ENCODE measurements at regions of chr3 and their contacts with region 1.

Region 1: DNA sequence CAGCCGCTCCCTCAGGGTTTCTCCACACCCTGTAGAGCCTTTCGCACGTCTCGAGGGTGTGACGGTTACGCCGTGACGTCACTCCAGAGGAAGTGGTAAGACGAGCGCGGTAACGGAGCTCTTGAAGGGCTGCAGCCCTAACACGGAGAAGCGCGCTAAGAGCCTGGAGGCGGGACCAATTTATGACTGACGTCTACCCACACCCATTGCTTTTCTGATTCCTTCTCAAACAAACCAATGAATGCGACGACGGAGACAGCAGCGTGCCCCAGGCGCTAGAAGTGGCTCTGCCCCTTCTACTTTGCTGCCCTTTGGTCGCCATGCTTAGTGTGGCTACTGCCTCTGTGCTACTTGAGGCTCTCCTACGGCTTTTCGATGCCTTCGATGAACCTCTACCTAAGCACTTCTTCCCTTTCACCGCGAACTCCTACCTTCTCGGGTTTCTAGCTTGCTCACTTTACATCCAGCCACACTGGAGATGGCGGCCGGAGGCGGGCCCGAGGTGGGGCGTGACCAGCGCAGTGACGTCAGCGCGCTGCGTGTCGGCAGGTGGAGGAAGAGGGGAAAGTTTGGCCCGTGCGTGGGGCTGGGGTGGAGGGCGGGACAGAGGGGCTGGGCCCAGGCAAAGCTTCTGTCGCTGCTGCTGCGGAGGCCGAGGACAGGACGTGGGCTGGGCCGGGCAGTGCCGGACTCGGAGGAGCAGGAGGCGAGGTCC is at the start of gene OXSR1:
- DNase-seq: peak; percentile 94 to 100 (median 97)
- ATAC-seq: peak; percentile 89 to 94 (median 91)
- H3K4me3 ChIP-seq: peak within 1 kb of the TSS; percentile 89 to 90
- H3K4me3 Mint-ChIP-seq: peak within 1 kb of the TSS; percentile 85 to 93 (median 92)
- H3K27ac ChIP-seq: peak within 1 kb of the TSS; percentile 100
- H3K27ac Mint-ChIP-seq: peak within 1 kb of the TSS; percentile 100
- H3K4me1 ChIP-seq: peaks cover 15 to 24% of the 10 kb centered on the region in 2 experiments
- H3K4me1 Mint-ChIP-seq: peaks cover 42 to 55% (median 51%) of the 10 kb centered on the region in 3 donors
- H3K27me3 ChIP-seq: no peaks in the 10 kb centered on the region
- H3K27me3 Mint-ChIP-seq: no peaks in the 10 kb centered on the region
- total RNA-seq, gene OXSR1: 30.7 to 40.4 (median 37.4) TPM

Region 2: GRCh38 chr3:38136777-38137614 is 28.1 kb before region 1 on chr3 and contains the start of gene ACAA1:
- CTCF ChIA-PET with region 1: interaction called, 3 to 24 read pairs
- POLR2A ChIA-PET with region 1: interaction called, 15 to 22 read pairs
- DNase-seq: peak; percentile 90 to 98 (median 96)
- ATAC-seq: peak; percentile 88 to 91 (median 90)
- H3K4me3 ChIP-seq: peak within 1 kb of the TSS; percentile 93 to 98
- H3K4me3 Mint-ChIP-seq: peak within 1 kb of the TSS; percentile 89 to 97 (median 96)
- H3K27ac ChIP-seq: peak within 1 kb of the TSS; percentile 92
- H3K27ac Mint-ChIP-seq: peak within 1 kb of the TSS; percentile 99 to 100
- H3K4me1 ChIP-seq: peaks cover 16 to 70% of the 10 kb centered on the region in 2 experiments
- H3K4me1 Mint-ChIP-seq: peaks cover 71 to 76% (median 76%) of the 10 kb centered on the region in 3 donors
- H3K27me3 ChIP-seq: no peaks in the 10 kb centered on the region
- H3K27me3 Mint-ChIP-seq: no peaks in the 10 kb centered on the region
- total RNA-seq, gene ACAA1: 70.7 to 97.1 (median 90.8) TPM

Measured in T-cell (primary cell).